ENCODE measurements at regions of chr17 and their contacts with region 1.

Region 1: GRCh38 chr17:65137021-65137991 is at the start of gene RGS9:
- DNase-seq: peak; percentile 88
- H3K4me3 ChIP-seq: peak within 1 kb of the TSS; percentile 20 to 55 (median 34)
- H3K27ac ChIP-seq: peak within 1 kb of the TSS; percentile 21 to 31 (median 30)
- H3K4me1 ChIP-seq: peaks cover 0 to 10% (median 5%) of the 10 kb centered on the region in 4 donors
- H3K27me3 ChIP-seq: peaks cover 3% of the 10 kb centered on the region
- CTCF ChIP-seq: peak; percentile 96 to 100 (median 99)
- EP300 ChIP-seq: no peak
- POLR2A ChIP-seq: no peak
- total RNA-seq, gene RGS9: 2.6 to 10.6 (median 7.8) TPM in 3 of 4 donors, not detected in the other

Region 2: GRCh38 chr17:64975329-64976087 is 161.8 kb before region 1 on chr17:
- in situ Hi-C with region 1: loop called in 2 of 4 experiments (anchors 25 kb)
- intact Hi-C with region 1: no loop called
- DNase-seq: peak; percentile 97
- H3K4me3 ChIP-seq: peak overlapping the region; percentile 54 to 87 (median 85)
- H3K27ac ChIP-seq: peak overlapping the region; percentile 96 to 99 (median 99)
- H3K4me1 ChIP-seq: peaks cover 5 to 21% (median 13%) of the 10 kb centered on the region in 4 donors
- H3K27me3 ChIP-seq: no peaks in the 10 kb centered on the region
- CTCF ChIP-seq: no peak
- EP300 ChIP-seq: no peak
- POLR2A ChIP-seq: peak; percentile 93

Region 3: DNA sequence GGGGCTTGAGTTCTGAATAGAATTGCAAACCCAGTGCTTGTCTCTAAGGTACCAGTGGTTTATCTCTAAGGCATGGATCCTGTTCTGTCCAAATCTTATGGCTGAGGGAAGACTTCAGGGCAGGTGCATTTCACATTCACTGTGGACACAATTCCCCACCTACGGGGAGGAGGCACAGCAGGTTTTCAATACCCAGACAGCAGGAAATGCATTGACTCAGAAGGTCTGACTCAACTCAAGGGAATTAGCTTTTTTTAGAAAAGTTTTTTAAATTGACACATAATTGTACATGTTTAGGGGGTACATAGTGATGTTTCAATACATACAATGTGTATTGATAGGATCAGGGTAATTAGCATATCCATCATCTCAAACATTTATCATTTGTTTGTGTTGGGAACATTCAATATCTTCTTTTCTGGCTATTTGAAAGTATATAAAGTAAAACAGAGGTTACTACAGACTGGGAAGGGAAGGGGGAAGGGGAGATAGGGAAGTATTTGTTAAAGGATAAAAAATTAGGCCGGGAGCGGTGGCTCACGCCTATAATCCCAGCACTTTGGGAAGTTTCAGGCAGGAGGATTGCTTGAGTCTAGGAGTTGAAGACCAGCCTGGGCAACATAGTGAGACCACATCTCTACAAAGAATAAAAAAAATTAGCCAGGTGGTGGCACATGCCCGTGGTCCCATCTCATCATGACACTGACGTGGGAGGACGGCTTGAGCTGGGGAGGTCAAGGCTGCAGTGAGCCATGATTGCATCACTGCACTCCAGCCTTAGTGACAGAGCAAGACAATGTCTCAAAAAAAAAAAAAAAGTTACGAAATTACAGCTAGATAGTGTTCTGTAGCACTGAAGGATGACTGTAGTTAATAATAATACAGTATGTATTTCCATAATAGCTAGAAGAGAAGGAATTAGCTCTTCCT is 54.8 kb after region 1 on chr17:
- in situ Hi-C with region 1: no loop called
- intact Hi-C with region 1: no loop called
- DNase-seq: no peak
- H3K4me3 ChIP-seq: no peak overlapping the region
- H3K27ac ChIP-seq: no peak overlapping the region
- H3K4me1 ChIP-seq: no peaks in the 10 kb centered on the region
- H3K27me3 ChIP-seq: no peaks in the 10 kb centered on the region
- CTCF ChIP-seq: no peak
- EP300 ChIP-seq: no peak
- POLR2A ChIP-seq: no peak

Region 4: GRCh38 chr17:65314212-65314611 is 176.9 kb after region 1 on chr17:
- in situ Hi-C with region 1: no loop called
- intact Hi-C with region 1: no loop called
- DNase-seq: no peak
- H3K4me3 ChIP-seq: no peak overlapping the region
- H3K27ac ChIP-seq: no peak overlapping the region
- H3K4me1 ChIP-seq: no peaks in the 10 kb centered on the region
- H3K27me3 ChIP-seq: peaks cover 11% of the 10 kb centered on the region
- CTCF ChIP-seq: no peak
- EP300 ChIP-seq: no peak
- POLR2A ChIP-seq: no peak